ENCODE measurements at regions of chr11 and their contacts with region 1.

Region 1: GRCh38 chr11:11787305-11788062 is 54.3 kb upstream of the USP47 start:
- DNase-seq: peak; percentile 49 to 58
- ATAC-seq: peak; percentile 87 to 88
- H3K4me3 ChIP-seq: no peak overlapping the region
- H3K27ac ChIP-seq: no peak overlapping the region
- H3K4me1 ChIP-seq: peaks cover 5 to 12% of the 10 kb centered on the region in 2 donors
- H3K27me3 ChIP-seq: no peaks in the 10 kb centered on the region
- CTCF ChIP-seq: peak; percentile 84 to 88 (median 88)
- POLR2A ChIP-seq: no peak

Region 2: DNA sequence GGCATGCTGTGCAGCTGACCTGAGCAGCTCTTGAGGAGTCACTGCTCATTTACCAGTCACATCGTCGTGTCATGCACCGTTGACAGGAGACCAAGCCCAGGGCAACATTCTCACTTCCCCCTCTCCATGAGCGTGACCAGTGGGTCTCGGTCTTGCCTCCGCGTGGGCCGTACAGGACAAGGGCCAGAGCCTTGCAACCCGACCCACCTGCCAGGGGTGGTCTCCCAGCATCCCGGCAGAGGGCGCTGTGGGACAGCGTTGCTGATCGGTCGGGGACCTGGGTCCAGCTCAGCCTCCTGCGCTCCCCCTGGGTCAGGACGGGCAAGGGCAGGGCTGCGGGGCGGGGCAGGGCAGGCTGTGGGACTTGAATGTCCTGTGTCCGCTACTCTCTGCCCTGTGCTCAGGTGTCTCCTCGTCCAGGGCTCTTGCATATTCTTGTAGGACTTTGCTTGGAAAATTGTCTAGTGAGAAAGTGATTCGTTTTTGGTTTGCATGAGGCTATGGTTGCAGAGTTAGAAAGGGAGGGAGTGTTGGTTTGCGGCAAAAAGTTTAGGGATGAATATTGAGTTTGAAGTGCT is 995.0 kb before region 1 on chr11:
- in situ Hi-C with region 1: loop called (anchors 10 to 25 kb)
- intact Hi-C with region 1: loop called (anchors 5 kb)
- DNase-seq: peak; percentile 63 to 80
- ATAC-seq: peak; percentile 84 to 95
- H3K4me3 ChIP-seq: peak overlapping the region in 1 of 4 donors; percentile 17
- H3K27ac ChIP-seq: no peak overlapping the region
- H3K4me1 ChIP-seq: peaks cover 0 to 5% of the 10 kb centered on the region in 2 donors
- H3K27me3 ChIP-seq: no peaks in the 10 kb centered on the region
- CTCF ChIP-seq: peak; percentile 88 to 96 (median 93)
- POLR2A ChIP-seq: no peak

Region 3: GRCh38 chr11:11028017-11028692 is 759.3 kb before region 1 on chr11:
- in situ Hi-C with region 1: loop called (anchors 5 to 10 kb)
- intact Hi-C with region 1: loop called (anchors 2 kb)
- DNase-seq: peak; percentile 38 to 53
- ATAC-seq: peak; percentile 82 to 94
- H3K4me3 ChIP-seq: no peak overlapping the region
- H3K27ac ChIP-seq: no peak overlapping the region
- H3K4me1 ChIP-seq: no peaks in the 10 kb centered on the region
- H3K27me3 ChIP-seq: no peaks in the 10 kb centered on the region
- CTCF ChIP-seq: peak; percentile 65 to 85 (median 72)
- POLR2A ChIP-seq: no peak

Region 4: GRCh38 chr11:11265994-11266606 is 521.4 kb before region 1 on chr11:
- in situ Hi-C with region 1: no loop called
- intact Hi-C with region 1: loop called (anchors 10 kb)
- DNase-seq: peak in 1 of 2 donors; percentile 38
- ATAC-seq: peak; percentile 55 to 81
- H3K4me3 ChIP-seq: no peak overlapping the region
- H3K27ac ChIP-seq: no peak overlapping the region
- H3K4me1 ChIP-seq: peaks cover 0 to 10% of the 10 kb centered on the region in 2 donors
- H3K27me3 ChIP-seq: no peaks in the 10 kb centered on the region
- CTCF ChIP-seq: peak; percentile 70 to 85 (median 76)
- POLR2A ChIP-seq: no peak

Region 5: DNA sequence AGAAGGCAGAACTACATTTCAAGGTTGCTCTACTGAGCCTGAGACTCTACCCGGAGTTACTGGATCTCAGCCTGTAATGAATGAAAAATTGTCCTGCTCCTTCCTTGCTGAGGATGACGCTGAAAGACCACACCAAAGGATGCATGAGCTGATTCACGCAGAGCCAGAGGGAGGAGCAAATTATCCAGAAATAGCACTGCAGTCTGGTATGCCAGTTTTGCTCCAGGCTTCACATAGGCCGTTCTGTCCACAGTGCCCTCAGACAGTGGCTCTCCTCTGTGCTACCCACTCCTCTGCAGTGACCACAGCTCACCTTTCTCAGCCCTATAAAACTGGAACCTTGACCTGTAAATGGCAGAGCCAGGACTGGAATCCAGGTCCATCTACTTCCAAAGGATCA is 86.4 kb before region 1 on chr11:
- in situ Hi-C with region 1: loop called in 1 of 4 experiments (anchors 10 kb)
- intact Hi-C with region 1: loop called (anchors 2 kb)
- DNase-seq: peak; percentile 6 to 23
- ATAC-seq: peak; percentile 78 to 82
- H3K4me3 ChIP-seq: no peak overlapping the region
- H3K27ac ChIP-seq: no peak overlapping the region
- H3K4me1 ChIP-seq: peaks cover 0 to 5% of the 10 kb centered on the region in 2 donors
- H3K27me3 ChIP-seq: no peaks in the 10 kb centered on the region
- CTCF ChIP-seq: no peak
- POLR2A ChIP-seq: no peak

Region 6: GRCh38 chr11:11848891-11849746 is 61.6 kb after region 1 on chr11:
- in situ Hi-C with region 1: no loop called
- intact Hi-C with region 1: no loop called
- DNase-seq: peak; percentile 36 to 63
- ATAC-seq: peak; percentile 72 to 89
- H3K4me3 ChIP-seq: peak overlapping the region in 1 of 4 donors; percentile 3
- H3K27ac ChIP-seq: peak overlapping the region; percentile 6 to 99 (median 78)
- H3K4me1 ChIP-seq: peaks cover 89 to 95% of the 10 kb centered on the region in 2 donors
- H3K27me3 ChIP-seq: no peaks in the 10 kb centered on the region
- CTCF ChIP-seq: peak; percentile 27 to 62 (median 55)
- POLR2A ChIP-seq: no peak

Region 7: DNA sequence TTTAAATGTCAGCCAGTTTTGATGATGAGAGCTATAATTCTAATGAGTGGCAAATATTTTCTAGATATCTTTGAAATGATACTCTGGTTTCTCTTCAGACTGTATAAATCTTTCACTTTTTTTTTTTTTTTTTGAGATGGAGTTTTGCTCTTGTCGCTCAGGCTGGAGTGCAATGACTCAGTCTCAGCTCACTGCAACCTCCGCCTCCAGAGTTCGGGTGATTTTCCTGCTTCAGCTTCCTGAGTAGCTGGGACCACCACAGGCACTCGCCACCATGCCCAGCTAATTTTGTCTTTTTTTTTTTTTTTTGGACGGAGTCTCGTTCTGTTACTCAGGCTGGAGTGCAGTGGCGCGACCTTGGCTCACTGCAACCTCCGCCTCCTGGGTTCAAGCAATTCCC is 1000.4 kb after region 1 on chr11:
- in situ Hi-C with region 1: no loop called
- intact Hi-C with region 1: no loop called
- DNase-seq: no peak
- ATAC-seq: no peak
- H3K4me3 ChIP-seq: no peak overlapping the region
- H3K27ac ChIP-seq: peak overlapping the region in 3 of 4 donors; percentile 87 to 95 (median 93)
- H3K4me1 ChIP-seq: peaks cover 46 to 83% of the 10 kb centered on the region in 2 donors
- H3K27me3 ChIP-seq: no peaks in the 10 kb centered on the region
- CTCF ChIP-seq: no peak
- POLR2A ChIP-seq: no peak